ENCODE measurements at regions of chr5 and their contacts with region 1.

Region 1: GRCh38 chr5:40688127-40688761 is 8.5 kb downstream of the PTGER4 start:
- DNase-seq: peak; percentile 71 to 96 (median 85)
- H3K4me3 ChIP-seq: peak overlapping the region in 1 of 4 donors; percentile 20
- H3K27ac ChIP-seq: peak overlapping the region in 2 of 5 donors; percentile 1 to 46
- H3K4me1 ChIP-seq: peaks cover 0 to 18% of the 10 kb centered on the region in 2 donors
- H3K27me3 ChIP-seq: no peaks in the 10 kb centered on the region
- CTCF ChIP-seq: peak; percentile 75 to 93 (median 90)
- POLR2A ChIP-seq: no peak

Region 2: GRCh38 chr5:39580702-39581453 is 1107.4 kb before region 1 on chr5:
- intact Hi-C with region 1: loop called in 1 of 2 experiments (anchors 10 kb)
- DNase-seq: no peak
- H3K4me3 ChIP-seq: no peak overlapping the region
- H3K27ac ChIP-seq: no peak overlapping the region
- H3K4me1 ChIP-seq: no peaks in the 10 kb centered on the region
- H3K27me3 ChIP-seq: no peaks in the 10 kb centered on the region
- CTCF ChIP-seq: no peak
- POLR2A ChIP-seq: no peak

Region 3: DNA sequence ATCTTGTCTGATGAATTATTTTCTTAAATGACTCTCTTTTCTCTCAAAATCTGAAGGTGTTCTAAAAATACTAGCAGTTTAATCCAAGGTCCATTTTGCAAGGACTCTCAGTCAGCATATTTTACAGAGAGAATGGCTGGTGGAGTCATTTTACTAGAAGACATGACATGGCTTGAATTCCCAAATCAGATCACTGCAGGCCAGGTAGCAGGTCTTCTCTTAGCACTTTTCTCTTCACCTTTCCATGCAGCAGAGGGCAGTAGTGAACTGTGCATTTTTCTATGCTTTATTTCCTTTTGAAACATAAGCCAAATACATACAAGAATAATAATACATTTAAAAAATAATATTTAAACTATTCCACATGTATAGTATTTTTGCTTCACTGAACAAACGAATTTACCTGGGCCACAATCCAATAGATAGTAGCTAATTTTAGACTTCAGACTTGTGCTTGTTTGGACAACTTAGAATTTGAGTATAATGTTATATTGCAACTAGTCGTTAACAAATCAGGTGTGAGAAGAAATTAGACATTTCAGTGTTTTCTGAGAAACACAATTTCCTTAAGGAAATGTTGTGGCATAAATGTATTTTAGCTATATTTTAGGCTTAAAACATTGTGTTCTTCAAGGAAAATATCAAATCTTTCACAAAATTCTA is 974.1 kb before region 1 on chr5:
- intact Hi-C with region 1: loop called in 1 of 2 experiments (anchors 5 kb)
- DNase-seq: peak; percentile 14 to 66 (median 32)
- H3K4me3 ChIP-seq: no peak overlapping the region
- H3K27ac ChIP-seq: no peak overlapping the region
- H3K4me1 ChIP-seq: peaks cover 0 to 5% of the 10 kb centered on the region in 2 donors
- H3K27me3 ChIP-seq: no peaks in the 10 kb centered on the region
- CTCF ChIP-seq: peak; percentile 42 to 73 (median 60)
- POLR2A ChIP-seq: no peak

Region 4: DNA sequence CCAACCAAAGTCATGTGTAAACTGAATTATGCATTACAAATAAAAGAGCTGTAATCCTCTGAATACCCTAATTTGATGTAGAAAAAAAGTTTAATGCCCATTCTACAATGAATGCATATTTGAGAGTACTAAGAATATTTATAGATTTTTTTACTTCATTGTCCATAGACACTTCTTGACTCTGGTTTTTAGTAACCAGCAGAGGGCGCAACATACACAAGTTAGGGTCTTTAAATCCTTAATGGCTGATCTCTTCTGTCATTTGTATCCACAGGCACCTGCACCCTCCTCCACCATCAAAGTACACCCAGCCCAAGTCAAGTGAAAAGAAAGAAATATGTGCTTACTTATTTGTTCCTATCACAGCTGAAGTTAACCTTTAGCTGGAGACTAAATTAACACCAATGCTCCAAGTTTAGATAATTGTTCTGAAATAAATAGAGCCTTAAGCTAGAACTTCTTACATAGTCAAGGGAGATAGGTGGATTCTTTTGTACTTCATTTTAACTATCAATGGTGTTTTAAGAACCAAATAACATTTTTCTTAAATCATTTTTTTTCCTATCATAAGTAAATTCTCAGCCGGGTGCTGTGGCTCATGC is 739.3 kb before region 1 on chr5:
- intact Hi-C with region 1: loop called (anchors 5 to 10 kb)
- DNase-seq: peak; percentile 37 to 81 (median 63)
- H3K4me3 ChIP-seq: no peak overlapping the region
- H3K27ac ChIP-seq: no peak overlapping the region
- H3K4me1 ChIP-seq: no peaks in the 10 kb centered on the region
- H3K27me3 ChIP-seq: no peaks in the 10 kb centered on the region
- CTCF ChIP-seq: peak; percentile 46 to 75 (median 58)
- POLR2A ChIP-seq: no peak